A673 (cell line): ENCODE measurements at regions of chr1 and their contacts with region 1.

Region 1: GRCh38 chr1:211578640-211579433 is at the start of gene SLC30A1:
- DNase-seq: peak; percentile 99
- H3K4me3 ChIP-seq: peak within 1 kb of the TSS; percentile 86
- H3K27ac ChIP-seq: peak within 1 kb of the TSS; percentile 80
- H3K4me1 ChIP-seq: peaks cover 21% of the 10 kb centered on the region
- H3K27me3 ChIP-seq: no peaks in the 10 kb centered on the region
- CTCF ChIP-seq: no peak
- total RNA-seq, gene SLC30A1: 5.1 and 12.2 TPM in 2 replicates

Region 2: DNA sequence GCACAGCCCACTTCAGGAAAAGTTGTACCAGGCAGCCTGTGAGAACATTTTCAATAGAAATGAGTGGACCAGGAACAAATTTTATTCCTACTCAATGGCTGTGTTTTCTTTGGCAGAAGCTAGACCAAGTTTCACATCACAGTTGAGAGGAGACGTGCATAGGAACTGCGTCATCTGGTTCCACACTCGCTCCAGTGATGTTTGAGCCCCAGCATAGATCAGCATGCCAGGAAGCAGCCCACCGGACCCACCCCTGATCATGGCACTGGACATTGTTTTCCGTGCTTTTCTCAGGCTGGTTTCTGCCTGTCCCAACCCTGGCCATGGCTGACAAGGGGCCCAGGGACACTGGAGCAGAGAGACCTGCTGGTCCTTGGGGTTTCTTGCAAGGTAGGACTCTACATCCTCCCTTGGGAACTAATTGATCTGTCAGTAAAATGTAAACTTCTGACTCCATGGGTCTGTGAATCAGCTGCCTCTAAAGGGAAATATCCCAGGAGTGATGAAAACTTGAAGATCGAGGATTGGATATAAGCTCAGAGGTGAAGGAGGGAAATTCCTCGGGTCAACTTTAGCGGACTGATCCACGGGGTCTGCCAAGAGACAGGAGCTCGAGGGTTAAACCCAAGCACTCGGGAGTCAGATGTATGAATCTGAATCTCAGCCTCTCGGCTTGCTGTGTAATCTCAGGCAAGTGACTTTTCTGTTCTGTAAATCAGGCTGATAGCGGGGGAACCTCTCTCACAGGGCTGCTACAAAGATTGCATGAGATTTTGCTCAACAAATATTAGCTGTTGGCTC is 60.9 kb after region 1 on chr1:
- CTCF ChIA-PET with region 1: no interaction called
- POLR2A ChIA-PET with region 1: no interaction called
- intact Hi-C with region 1: loop called (anchors 5 kb)
- DNase-seq: no peak
- H3K4me3 ChIP-seq: no peak overlapping the region
- H3K27ac ChIP-seq: no peak overlapping the region
- H3K4me1 ChIP-seq: peaks cover 4% of the 10 kb centered on the region
- H3K27me3 ChIP-seq: no peaks in the 10 kb centered on the region
- CTCF ChIP-seq: no peak